ENCODE measurements at regions of chr12 and their contacts with region 1.

Region 1: GRCh38 chr12:123232807-123233543 is at the starts of genes MPHOSPH9 and MTRFR:
- DNase-seq: peak; percentile 99
- ATAC-seq: peak; percentile 93
- H3K4me3 ChIP-seq: peak within 1 kb of the TSS; percentile 69 to 97
- H3K27ac ChIP-seq: peak within 1 kb of the TSS; percentile 78
- H3K4me1 ChIP-seq: peaks cover 12 to 21% of the 10 kb centered on the region in 2 experiments; a peak in 3 of 4 replicates
- H3K27me3 ChIP-seq: no peaks in the 10 kb centered on the region
- CTCF ChIP-seq: no peak
- POLR2A ChIP-seq: peak; percentile 91
- RAD21 ChIP-seq: no peak
- total RNA-seq, gene MPHOSPH9: 44.9 TPM
- total RNA-seq, gene MTRFR: 27.0 TPM

Region 2: GRCh38 chr12:122860346-122861090 is 372.5 kb before region 1 on chr12:
- CTCF ChIA-PET with region 1: interaction called, 11 read pairs
- POLR2A ChIA-PET with region 1: no interaction called
- RAD21 ChIA-PET with region 1: no interaction called
- intact Hi-C with region 1: no loop called
- DNase-seq: peak; percentile 50
- ATAC-seq: peak; percentile 74
- H3K4me3 ChIP-seq: no peak overlapping the region
- H3K27ac ChIP-seq: no peak overlapping the region
- H3K4me1 ChIP-seq: no peaks in the 10 kb centered on the region
- H3K27me3 ChIP-seq: no peaks in the 10 kb centered on the region
- CTCF ChIP-seq: peak; percentile 87 to 94 (median 87)
- POLR2A ChIP-seq: no peak
- RAD21 ChIP-seq: peak; percentile 96

Region 3: DNA sequence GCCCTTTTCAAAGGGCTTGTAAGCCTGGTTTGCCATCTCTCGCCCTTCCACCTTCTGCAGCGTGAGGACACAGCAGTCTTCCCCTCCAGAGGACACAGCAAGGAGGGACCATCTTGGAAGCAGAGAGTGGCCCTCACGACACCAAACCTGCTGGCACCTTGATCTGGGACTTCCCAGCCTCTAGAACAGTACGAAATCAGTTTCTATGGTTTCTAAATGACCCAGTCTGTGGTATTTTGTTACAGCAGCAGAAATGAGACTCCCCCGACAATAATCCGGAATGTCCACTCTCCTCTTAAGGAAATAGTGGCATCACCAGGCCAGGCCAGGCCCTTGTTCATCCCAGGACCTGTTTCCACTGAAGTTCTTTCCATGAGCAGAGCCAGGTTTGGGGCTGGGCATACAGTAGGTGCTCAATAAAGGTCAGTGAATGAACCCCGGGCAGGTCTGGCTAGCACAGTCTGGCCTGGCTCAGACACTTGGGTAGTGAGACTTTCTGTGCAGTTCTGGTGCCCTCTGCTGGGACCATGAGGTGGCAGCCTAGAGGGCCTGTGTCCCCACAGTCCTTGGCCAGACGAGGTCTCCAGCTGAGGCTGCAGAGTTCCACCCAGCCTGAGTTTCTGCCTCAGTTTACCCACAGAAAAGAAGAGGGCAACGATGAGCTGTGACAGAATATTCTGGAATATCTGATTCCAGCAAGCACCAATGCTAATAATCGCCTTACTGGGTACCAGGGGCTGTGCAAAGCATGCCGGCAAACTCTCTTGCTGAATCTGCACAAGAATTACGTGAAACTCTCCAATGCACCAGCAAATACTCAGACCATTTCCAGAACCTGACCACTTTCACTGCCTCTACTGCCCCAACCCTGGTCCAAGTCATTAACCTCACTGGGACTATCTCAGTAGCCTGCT is 280.7 kb before region 1 on chr12:
- CTCF ChIA-PET with region 1: interaction called, 6 read pairs
- POLR2A ChIA-PET with region 1: interaction called, 4 read pairs
- RAD21 ChIA-PET with region 1: no interaction called
- intact Hi-C with region 1: loop called (anchors 1 kb)
- DNase-seq: peak; percentile 59
- ATAC-seq: peak; percentile 95
- H3K4me3 ChIP-seq: no peak overlapping the region
- H3K27ac ChIP-seq: 0 out of 2 replicates have a peak overlapping the region, but pooled peaks have one; percentile 4
- H3K4me1 ChIP-seq: peaks cover 11 to 32% of the 10 kb centered on the region in 2 experiments
- H3K27me3 ChIP-seq: no peaks in the 10 kb centered on the region
- CTCF ChIP-seq: peak in 2 of 3 experiments; percentile 88 to 97; a peak in 4 of 6 replicates
- POLR2A ChIP-seq: no peak
- RAD21 ChIP-seq: no peak

Region 4: DNA sequence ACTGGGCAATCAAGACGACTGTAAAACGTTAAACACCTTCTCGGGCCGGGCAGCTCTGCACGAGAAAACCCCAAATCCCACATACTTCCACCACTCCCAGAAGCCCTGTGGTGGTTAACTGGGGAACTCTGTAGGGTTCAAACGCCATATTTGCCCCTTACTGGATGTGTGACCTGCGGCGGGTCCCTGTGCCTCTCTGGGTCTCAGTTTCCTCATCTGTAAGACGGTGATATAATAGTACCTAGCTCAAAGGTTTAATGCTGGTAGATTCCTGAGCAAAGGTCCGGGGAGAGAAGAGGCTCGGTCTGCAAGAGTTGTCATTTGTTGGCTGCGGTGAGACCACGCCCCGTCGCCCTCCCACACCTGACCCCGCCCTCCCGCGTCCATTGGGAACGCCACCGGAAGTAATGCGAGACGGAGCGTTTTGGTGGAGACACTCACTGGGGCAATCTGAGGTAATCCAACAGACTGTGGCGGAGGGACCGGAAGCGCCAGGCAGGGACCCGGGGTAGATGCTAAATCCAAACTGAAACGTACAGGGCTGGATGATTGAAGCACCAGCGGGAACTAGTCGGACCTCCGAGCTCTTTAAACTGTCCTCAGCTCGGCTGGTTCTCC is 258.6 kb before region 1 on chr12:
- CTCF ChIA-PET with region 1: interaction called, 9 read pairs
- POLR2A ChIA-PET with region 1: interaction called, 19 read pairs
- RAD21 ChIA-PET with region 1: interaction called in 1 of 2 experiments, 3 read pairs
- intact Hi-C with region 1: loop called (anchors 2 kb)
- DNase-seq: peak; percentile 97
- ATAC-seq: peak; percentile 83
- H3K4me3 ChIP-seq: peak overlapping the region; percentile 87
- H3K27ac ChIP-seq: peak overlapping the region; percentile 87
- H3K4me1 ChIP-seq: peaks cover 10 to 18% of the 10 kb centered on the region in 2 experiments
- H3K27me3 ChIP-seq: no peaks in the 10 kb centered on the region
- CTCF ChIP-seq: no peak
- POLR2A ChIP-seq: peak; percentile 79
- RAD21 ChIP-seq: no peak

Region 5: DNA sequence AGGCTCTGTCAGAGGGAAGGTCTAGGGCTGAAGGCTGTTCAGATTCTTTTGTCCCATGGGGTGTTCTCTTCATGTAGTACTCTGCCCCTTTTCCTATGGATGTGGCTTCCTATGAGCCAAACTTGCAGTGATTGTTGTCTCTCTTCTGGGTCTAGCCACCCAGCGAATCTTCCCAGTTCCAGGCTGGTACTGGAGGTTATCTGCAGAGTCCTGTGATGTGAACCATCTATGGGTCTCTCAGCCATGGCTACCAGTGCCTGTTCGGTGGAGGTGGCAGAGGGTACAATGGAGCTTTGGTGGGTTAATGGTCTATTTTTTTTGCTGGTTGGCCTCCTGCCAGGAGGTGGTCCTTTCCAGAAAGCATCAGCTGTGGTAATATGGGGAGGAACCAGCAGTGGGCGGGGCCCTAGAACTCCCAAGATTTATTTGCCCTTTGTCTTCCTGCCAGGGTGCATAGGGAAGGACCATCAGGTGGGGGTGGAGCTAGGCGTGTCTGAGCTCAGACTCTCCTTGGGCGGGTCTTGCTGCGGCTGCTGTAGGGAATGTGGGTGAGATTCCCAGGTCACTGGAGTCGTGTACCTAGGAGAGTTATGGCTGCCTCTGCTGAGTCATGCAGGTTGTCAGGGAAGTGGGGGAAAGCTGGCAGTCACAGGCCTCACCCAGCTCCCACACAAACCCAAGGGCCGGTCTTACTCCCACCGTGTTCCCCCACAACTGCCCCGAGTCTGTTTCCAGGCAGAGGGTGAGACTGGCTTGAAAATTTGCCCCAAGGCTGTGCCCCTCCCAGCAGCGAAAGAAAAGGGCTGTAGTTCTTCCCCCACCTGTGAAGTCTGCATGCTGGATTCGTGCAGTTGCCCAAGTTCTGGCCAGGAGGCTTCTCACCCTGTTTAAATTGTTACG is 17.8 kb after region 1 on chr12:
- CTCF ChIA-PET with region 1: interaction called, 7 read pairs
- POLR2A ChIA-PET with region 1: interaction called, 19 read pairs
- RAD21 ChIA-PET with region 1: no interaction called
- intact Hi-C with region 1: no loop called
- DNase-seq: peak; percentile 69
- ATAC-seq: peak; percentile 87
- H3K4me3 ChIP-seq: peak overlapping the region in 1 of 2 experiments; percentile 39; a peak in 2 of 4 replicates
- H3K27ac ChIP-seq: peak overlapping the region; percentile 77
- H3K4me1 ChIP-seq: peaks cover 19 to 29% of the 10 kb centered on the region in 2 experiments
- H3K27me3 ChIP-seq: no peaks in the 10 kb centered on the region
- CTCF ChIP-seq: no peak
- POLR2A ChIP-seq: no peak
- RAD21 ChIP-seq: no peak

Measured in HCT116 (cell line).